Mammary epithelial cell (primary cell): ENCODE measurements at regions of chr16 and their contacts with region 1.

Region 1: GRCh38 chr16:66894948-66895688 is 14.8 kb downstream of the PDP2 start:
- DNase-seq: peak; percentile 60
- H3K4me3 ChIP-seq: no peak overlapping the region
- H3K27ac ChIP-seq: no peak overlapping the region
- H3K4me1 ChIP-seq: peaks cover 28% of the 10 kb centered on the region
- H3K27me3 ChIP-seq: no peaks in the 10 kb centered on the region
- CTCF ChIP-seq: peak; percentile 95

Region 2: GRCh38 chr16:66830422-66831404 is 64.4 kb before region 1 on chr16 and contains the start of gene NAE1:
- CTCF ChIA-PET with region 1: no interaction called
- dilution Hi-C with region 1: loop called (anchors 5 kb)
- in situ Hi-C with region 1: no loop called
- intact Hi-C with region 1: no loop called
- DNase-seq: peak; percentile 83
- H3K4me3 ChIP-seq: peak within 1 kb of the TSS; percentile 73 to 80 (median 77)
- H3K27ac ChIP-seq: peak within 1 kb of the TSS; percentile 76
- H3K4me1 ChIP-seq: peaks cover 11% of the 10 kb centered on the region
- H3K27me3 ChIP-seq: no peaks in the 10 kb centered on the region
- CTCF ChIP-seq: peak; percentile 91 to 97
- total RNA-seq, gene NAE1: 66.5 to 81.1 TPM

Region 3: GRCh38 chr16:66934153-66934838 is 39.2 kb after region 1 on chr16 and contains the start of gene CIAO2B:
- CTCF ChIA-PET with region 1: no interaction called
- dilution Hi-C with region 1: loop called (anchors 5 kb)
- in situ Hi-C with region 1: loop called (anchors 5 kb)
- intact Hi-C with region 1: loop called (anchors 1 kb)
- DNase-seq: peak; percentile 81
- H3K4me3 ChIP-seq: peak within 1 kb of the TSS; percentile 66 to 94 (median 86)
- H3K27ac ChIP-seq: peak within 1 kb of the TSS; percentile 92
- H3K4me1 ChIP-seq: peaks cover 15% of the 10 kb centered on the region
- H3K27me3 ChIP-seq: no peaks in the 10 kb centered on the region
- CTCF ChIP-seq: no peak
- total RNA-seq, gene CIAO2B: 89.9 to 104 TPM

Region 4: GRCh38 chr16:66954097-66954659 is 59.1 kb after region 1 on chr16:
- CTCF ChIA-PET with region 1: no interaction called
- dilution Hi-C with region 1: no loop called
- in situ Hi-C with region 1: no loop called
- intact Hi-C with region 1: loop called (anchors 2 kb)
- DNase-seq: peak; percentile 68
- H3K4me3 ChIP-seq: no peak overlapping the region
- H3K27ac ChIP-seq: no peak overlapping the region
- H3K4me1 ChIP-seq: peaks cover 16% of the 10 kb centered on the region
- H3K27me3 ChIP-seq: no peaks in the 10 kb centered on the region
- CTCF ChIP-seq: peak; percentile 83 to 86

Region 5: DNA sequence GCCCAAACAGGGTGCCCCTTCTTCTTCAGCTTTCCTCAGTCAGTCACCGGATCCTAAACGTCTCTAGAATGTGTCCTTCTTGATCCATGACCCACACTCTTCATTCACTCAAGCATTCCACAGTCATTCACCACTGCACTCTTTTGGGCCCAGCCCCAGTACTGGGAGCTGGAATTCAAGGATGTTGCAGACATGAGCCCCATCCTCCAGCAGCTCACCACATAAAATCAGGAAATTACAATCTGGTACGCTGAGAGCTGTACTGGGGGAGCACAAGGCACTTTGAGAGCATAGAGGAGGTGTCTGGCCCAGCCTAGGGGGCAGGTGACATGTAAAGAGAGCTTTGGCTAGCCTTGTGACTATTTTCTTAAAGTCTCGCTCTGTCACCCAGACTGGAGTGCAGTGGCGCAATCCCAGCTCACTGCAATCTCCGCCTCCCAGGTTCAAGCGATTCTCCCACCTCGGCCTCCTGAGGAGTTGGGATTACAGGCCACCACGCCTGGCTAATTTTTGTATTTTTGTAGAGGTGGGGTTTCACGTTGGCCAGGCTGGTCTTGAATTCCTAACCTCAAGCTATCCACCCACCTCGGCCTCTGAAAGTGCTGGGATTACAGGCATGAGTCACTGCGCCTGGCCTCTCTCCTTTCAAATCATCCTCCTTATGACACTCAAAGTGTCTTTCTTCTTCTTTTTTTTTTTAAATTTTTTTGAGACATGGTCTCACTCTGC is 112.0 kb after region 1 on chr16:
- CTCF ChIA-PET with region 1: no interaction called
- dilution Hi-C with region 1: no loop called
- in situ Hi-C with region 1: no loop called
- intact Hi-C with region 1: loop called (anchors 5 kb)
- DNase-seq: no peak
- H3K4me3 ChIP-seq: no peak overlapping the region
- H3K27ac ChIP-seq: no peak overlapping the region
- H3K4me1 ChIP-seq: peaks cover 7% of the 10 kb centered on the region
- H3K27me3 ChIP-seq: no peaks in the 10 kb centered on the region
- CTCF ChIP-seq: no peak

Region 6: GRCh38 chr16:67084345-67085028 is 189.4 kb after region 1 on chr16:
- CTCF ChIA-PET with region 1: no interaction called
- dilution Hi-C with region 1: no loop called
- in situ Hi-C with region 1: no loop called
- intact Hi-C with region 1: no loop called
- DNase-seq: no peak
- H3K4me3 ChIP-seq: no peak overlapping the region
- H3K27ac ChIP-seq: no peak overlapping the region
- H3K4me1 ChIP-seq: no peaks in the 10 kb centered on the region
- H3K27me3 ChIP-seq: no peaks in the 10 kb centered on the region
- CTCF ChIP-seq: no peak

Region 7: DNA sequence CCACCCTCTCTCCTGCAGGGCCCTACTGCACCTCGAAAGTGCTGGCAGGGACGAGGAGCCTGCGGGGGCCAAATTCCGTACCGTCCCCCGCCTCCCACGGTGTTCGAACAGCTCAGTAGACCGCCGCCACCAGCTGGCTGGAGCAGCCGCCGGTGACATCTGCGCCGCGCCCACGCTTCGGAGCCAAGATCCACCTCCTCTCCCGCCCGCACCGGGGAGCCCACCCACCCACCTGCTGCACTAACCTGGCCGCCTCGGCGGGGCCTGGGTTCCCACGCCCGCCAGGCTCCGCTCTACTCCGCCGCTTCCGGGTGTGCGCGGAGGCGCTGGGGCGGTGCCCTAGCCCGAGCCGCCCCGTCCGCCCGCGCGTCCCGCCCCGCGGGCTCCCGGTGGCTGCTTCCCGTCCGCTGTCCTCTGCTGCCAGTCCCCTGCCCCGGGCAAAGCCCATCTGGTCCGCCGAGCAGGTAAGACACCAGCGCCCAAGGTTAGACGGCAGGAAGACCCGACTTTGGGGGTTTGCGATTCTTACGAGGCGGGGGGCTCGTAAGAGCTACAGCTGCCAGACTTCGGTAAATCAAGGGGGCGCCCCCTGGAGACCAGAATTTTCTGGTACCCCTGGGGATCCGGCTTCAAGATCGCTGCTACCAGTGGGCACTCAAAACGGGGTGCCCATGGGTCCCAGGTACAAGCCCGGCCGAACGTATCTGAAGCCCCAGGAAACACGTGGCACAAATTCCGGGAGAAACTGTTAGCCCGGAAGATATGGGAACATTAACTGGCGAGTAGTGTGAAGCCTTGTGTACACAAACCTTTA is 264.7 kb after region 1 on chr16 and contains the starts of genes FBXL8 and TRADD:
- CTCF ChIA-PET with region 1: no interaction called
- dilution Hi-C with region 1: no loop called
- in situ Hi-C with region 1: no loop called
- intact Hi-C with region 1: loop called (anchors 1 kb)
- DNase-seq: peak; percentile 73
- H3K4me3 ChIP-seq: peak within 1 kb of the TSS; percentile 64 to 99 (median 72)
- H3K27ac ChIP-seq: peak within 1 kb of the TSS; percentile 40
- H3K4me1 ChIP-seq: peaks cover 15% of the 10 kb centered on the region
- H3K27me3 ChIP-seq: no peaks in the 10 kb centered on the region
- CTCF ChIP-seq: peak; percentile 4 to 54
- total RNA-seq, gene FBXL8: 12.0 to 14.6 TPM
- total RNA-seq, gene TRADD: 17.8 to 18.6 TPM